PC-3 (cell line): ENCODE measurements at regions of chr9 and their contacts with region 1.

Region 1: DNA sequence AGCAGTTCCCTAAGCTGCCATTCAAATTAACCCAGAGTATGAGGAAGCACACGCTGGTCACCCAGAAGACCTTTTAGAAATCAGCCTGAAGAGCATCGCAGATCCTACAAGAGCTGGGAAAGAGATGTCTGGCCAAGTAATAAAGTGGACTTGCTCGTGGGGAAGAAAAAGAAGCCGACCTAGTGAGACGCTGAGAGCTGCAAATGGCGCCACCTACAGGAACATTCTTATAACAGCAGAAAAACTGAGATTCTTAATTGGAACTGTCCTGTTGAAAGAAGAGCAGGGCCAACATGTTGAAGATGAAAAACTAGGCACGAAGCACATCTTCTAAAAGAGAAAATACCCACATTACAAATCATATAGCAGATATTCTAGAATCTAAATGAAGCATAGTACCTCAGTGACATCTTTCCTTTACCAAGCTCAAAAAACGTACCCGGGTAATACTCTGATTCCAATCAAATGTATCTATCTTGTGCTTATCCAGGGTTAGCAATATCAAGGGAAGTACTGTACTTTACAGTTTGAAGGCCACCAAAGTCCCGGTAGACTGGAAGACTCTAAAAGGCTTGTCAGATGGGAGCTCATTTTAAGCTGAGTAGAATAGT is 3.9 kb upstream of the GNAQ start:
- DNase-seq: peak; percentile 74
- ATAC-seq: peak; percentile 7; the same call in 1 of the 2 replicates
- H3K4me3 ChIP-seq: peak overlapping the region; percentile 35; the same call in 1 of the 2 replicates
- H3K27ac ChIP-seq: no peak overlapping the region
- H3K4me1 ChIP-seq: peaks cover 9% of the 10 kb centered on the region; the same call in 1 of the 2 replicates
- H3K27me3 ChIP-seq: no peaks in the 10 kb centered on the region
- CTCF ChIP-seq: peak; percentile 78

Region 2: GRCh38 chr9:78213712-78214111 is 178.2 kb after region 1 on chr9:
- CTCF ChIA-PET with region 1: no interaction called
- POLR2A ChIA-PET with region 1: no interaction called
- intact Hi-C with region 1: loop called (anchors 10 kb)
- DNase-seq: peak; percentile 18
- ATAC-seq: no peak
- H3K4me3 ChIP-seq: no peak overlapping the region
- H3K27ac ChIP-seq: no peak overlapping the region
- H3K4me1 ChIP-seq: no peaks in the 10 kb centered on the region
- H3K27me3 ChIP-seq: no peaks in the 10 kb centered on the region
- CTCF ChIP-seq: peak; percentile 44